AG04449 (cell line): ENCODE measurements at regions of chr21 and their contacts with region 1.

Region 1: GRCh38 chr21:31180256-31181081 is 142.2 kb upstream of the KRTAP19-8 start:
- DNase-seq: no peak
- H3K4me3 ChIP-seq: no peak overlapping the region
- CTCF ChIP-seq: peak; percentile 46

Region 2: GRCh38 chr21:31098576-31099005 is 81.9 kb before region 1 on chr21:
- CTCF ChIA-PET with region 1: interaction called, 568 read pairs
- POLR2A ChIA-PET with region 1: no interaction called
- DNase-seq: no peak
- H3K4me3 ChIP-seq: no peak overlapping the region
- CTCF ChIP-seq: peak; percentile 90

Region 3: DNA sequence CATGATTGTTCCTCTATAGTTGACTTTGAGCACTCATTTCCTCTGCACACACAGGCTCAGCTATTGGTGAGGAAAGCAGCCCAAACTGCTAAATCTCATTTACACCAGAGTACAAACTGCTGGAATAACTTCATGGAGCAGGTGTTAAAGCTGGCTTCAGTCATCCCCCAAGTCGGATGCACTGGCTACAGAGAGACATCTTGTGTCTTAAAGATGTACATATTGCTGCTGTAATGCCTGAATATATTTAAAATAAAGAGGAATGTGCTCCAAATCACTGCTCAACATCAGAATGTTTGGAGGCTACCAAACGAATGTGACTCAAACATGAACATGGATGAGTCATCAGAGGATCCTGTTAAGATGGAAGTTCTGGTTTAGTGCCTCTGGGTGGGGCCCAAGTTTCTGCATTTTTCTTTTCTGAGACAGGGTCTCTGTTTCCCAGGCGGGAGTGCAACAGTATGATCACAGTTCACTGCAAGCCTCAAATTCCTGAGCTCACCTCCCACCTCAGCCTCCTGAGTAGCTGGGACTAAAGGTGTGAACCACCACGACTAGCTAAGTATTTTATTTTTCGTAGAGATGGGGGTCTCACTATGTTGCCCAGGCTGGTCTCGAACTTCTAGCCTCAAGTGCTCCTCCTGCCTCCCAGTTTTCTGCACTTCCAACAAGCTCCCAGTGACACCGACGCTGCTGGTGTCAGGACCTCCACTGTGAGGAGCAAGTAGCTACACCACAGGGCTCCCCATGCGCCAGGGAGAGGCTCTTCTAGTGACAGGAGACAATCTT is 63.1 kb before region 1 on chr21:
- CTCF ChIA-PET with region 1: interaction called, 568 read pairs
- POLR2A ChIA-PET with region 1: no interaction called
- DNase-seq: peak; percentile 61
- H3K4me3 ChIP-seq: no peak overlapping the region
- CTCF ChIP-seq: no peak

Region 4: GRCh38 chr21:31161157-31161556 is 19.3 kb before region 1 on chr21:
- CTCF ChIA-PET with region 1: interaction called, 14 read pairs
- POLR2A ChIA-PET with region 1: no interaction called
- DNase-seq: no peak
- H3K4me3 ChIP-seq: no peak overlapping the region
- CTCF ChIP-seq: no peak

Region 5: DNA sequence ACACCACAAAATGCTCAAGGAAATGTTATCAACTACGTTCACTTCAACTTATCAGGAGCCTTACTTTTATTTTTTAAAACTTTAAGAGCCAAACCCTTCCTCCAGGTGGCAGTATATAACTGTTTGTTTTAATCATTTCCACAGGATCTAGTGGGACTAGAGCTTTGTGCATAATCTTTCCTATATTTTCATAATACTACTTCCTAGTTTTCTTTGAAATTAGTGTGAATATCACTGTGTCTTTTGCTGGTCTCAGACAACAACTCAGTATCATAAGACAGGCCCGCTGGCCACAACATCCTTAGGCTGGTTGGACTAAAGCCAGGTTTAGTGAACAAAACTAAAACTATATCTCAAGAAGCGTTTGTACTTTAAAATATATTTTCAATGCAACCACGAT is 18.1 kb after region 1 on chr21:
- CTCF ChIA-PET with region 1: interaction called, 77 read pairs
- POLR2A ChIA-PET with region 1: no interaction called
- DNase-seq: peak; percentile 10
- H3K4me3 ChIP-seq: no peak overlapping the region
- CTCF ChIP-seq: peak; percentile 25

Region 6: GRCh38 chr21:31235671-31236521 is 55.4 kb after region 1 on chr21:
- CTCF ChIA-PET with region 1: no interaction called
- POLR2A ChIA-PET with region 1: no interaction called
- DNase-seq: no peak
- H3K4me3 ChIP-seq: no peak overlapping the region
- CTCF ChIP-seq: no peak

Region 7: DNA sequence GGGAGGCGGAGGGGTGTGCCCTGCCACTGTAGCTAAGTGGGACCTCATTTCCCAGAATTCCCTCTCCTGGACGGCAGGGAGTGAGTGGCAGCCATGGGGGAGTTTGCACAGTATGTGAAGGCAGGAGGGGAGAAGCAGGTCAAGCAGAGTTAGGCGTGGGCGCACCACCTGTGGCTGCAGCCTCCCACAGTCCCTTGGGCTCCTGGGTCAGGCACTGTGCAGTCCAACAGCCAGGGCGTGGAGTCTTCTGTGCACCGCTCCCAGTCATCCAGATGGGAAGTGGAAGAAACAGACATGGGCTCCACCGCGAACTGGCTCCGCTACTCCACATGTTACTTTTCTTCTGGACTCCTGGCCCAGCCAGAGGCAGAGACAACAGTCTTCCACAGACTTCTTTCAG is 249.0 kb after region 1 on chr21:
- CTCF ChIA-PET with region 1: no interaction called
- POLR2A ChIA-PET with region 1: no interaction called
- DNase-seq: no peak
- H3K4me3 ChIP-seq: no peak overlapping the region
- CTCF ChIP-seq: no peak